Mammary epithelial cell (primary cell): ENCODE measurements at regions of chr20 and their contacts with region 1.

Region 1: GRCh38 chr20:49713753-49714712 is at the start of gene B4GALT5:
- DNase-seq: no peak
- H3K4me3 ChIP-seq: peak within 1 kb of the TSS; percentile 69 to 89 (median 89)
- H3K27ac ChIP-seq: peak within 1 kb of the TSS; percentile 68
- H3K4me1 ChIP-seq: peaks cover 16% of the 10 kb centered on the region
- H3K27me3 ChIP-seq: no peaks in the 10 kb centered on the region
- CTCF ChIP-seq: no peak
- total RNA-seq, gene B4GALT5: 22.7 to 22.8 TPM

Region 2: GRCh38 chr20:49203011-49203410 is 511.0 kb before region 1 on chr20:
- CTCF ChIA-PET with region 1: no interaction called
- dilution Hi-C with region 1: no loop called
- in situ Hi-C with region 1: no loop called
- intact Hi-C with region 1: no loop called
- DNase-seq: no peak
- H3K4me3 ChIP-seq: no peak overlapping the region
- H3K27ac ChIP-seq: no peak overlapping the region
- H3K4me1 ChIP-seq: no peaks in the 10 kb centered on the region
- H3K27me3 ChIP-seq: no peaks in the 10 kb centered on the region
- CTCF ChIP-seq: no peak

Region 3: DNA sequence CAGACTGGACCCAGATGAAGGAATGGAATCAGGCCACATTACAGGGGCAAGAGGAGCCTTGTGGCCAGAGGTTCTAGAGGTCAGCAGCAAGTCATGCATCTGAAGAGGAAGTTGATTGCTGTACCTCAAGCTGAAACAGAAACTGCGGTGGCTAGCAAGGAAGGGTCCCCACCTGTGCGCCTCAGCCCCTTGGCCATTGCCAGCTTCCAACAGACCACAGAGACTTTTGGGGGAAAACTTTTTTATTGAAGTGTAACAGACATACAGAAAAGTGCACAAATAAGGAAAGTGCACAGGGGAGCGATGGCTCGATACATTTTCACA is 71.8 kb after region 1 on chr20:
- CTCF ChIA-PET with region 1: no interaction called
- dilution Hi-C with region 1: no loop called
- in situ Hi-C with region 1: no loop called
- intact Hi-C with region 1: loop called (anchors 5 kb)
- DNase-seq: no peak
- H3K4me3 ChIP-seq: no peak overlapping the region
- H3K27ac ChIP-seq: no peak overlapping the region
- H3K4me1 ChIP-seq: no peaks in the 10 kb centered on the region
- H3K27me3 ChIP-seq: no peaks in the 10 kb centered on the region
- CTCF ChIP-seq: no peak

Region 4: GRCh38 chr20:49812463-49813304 is 98.7 kb after region 1 on chr20 and contains the start of gene SLC9A8:
- CTCF ChIA-PET with region 1: no interaction called
- dilution Hi-C with region 1: no loop called
- in situ Hi-C with region 1: no loop called
- intact Hi-C with region 1: loop called (anchors 5 kb)
- DNase-seq: peak; percentile 98
- H3K4me3 ChIP-seq: peak within 1 kb of the TSS; percentile 67 to 96 (median 69)
- H3K27ac ChIP-seq: peak within 1 kb of the TSS; percentile 95
- H3K4me1 ChIP-seq: peaks cover 13% of the 10 kb centered on the region
- H3K27me3 ChIP-seq: no peaks in the 10 kb centered on the region
- CTCF ChIP-seq: peak; percentile 17 to 49
- total RNA-seq, gene SLC9A8: 6.8 to 7.7 TPM